ENCODE measurements at regions of chr7 and their contacts with region 1.

Region 1: DNA sequence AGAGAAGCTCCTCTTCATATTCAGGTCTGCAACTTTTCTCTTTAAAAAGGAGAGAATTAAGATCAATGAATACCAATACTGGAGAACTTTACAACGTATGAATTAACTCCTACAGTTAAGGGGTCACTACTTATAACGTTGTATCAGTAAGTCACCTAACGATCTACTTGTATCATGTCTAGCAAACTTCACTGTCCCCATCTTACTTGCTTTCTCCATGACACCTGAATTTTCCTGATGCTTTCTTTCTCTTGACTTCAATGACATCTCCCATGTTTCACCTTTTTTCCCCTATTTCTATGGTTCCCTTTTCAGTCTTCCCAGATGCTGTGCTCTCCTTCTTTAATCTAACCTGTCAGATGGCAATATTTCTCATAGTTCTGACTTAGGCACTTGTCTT is 19.6 kb downstream of the NAMPT start:
- DNase-seq: no peak
- H3K4me3 Mint-ChIP-seq: no peak overlapping the region
- H3K27ac Mint-ChIP-seq: peak overlapping the region; percentile 1
- H3K4me1 Mint-ChIP-seq: peaks cover 27% of the 10 kb centered on the region
- H3K27me3 Mint-ChIP-seq: no peaks in the 10 kb centered on the region

Region 2: GRCh38 chr7:106239404-106239803 is 25.7 kb before region 1 on chr7:
- intact Hi-C with region 1: no loop called
- DNase-seq: no peak
- H3K4me3 Mint-ChIP-seq: no peak overlapping the region
- H3K27ac Mint-ChIP-seq: no peak overlapping the region
- H3K4me1 Mint-ChIP-seq: no peaks in the 10 kb centered on the region
- H3K27me3 Mint-ChIP-seq: no peaks in the 10 kb centered on the region

Region 3: GRCh38 chr7:106279425-106280197 is 14.5 kb after region 1 on chr7:
- intact Hi-C with region 1: loop called (anchors 2 kb)
- DNase-seq: no peak
- H3K4me3 Mint-ChIP-seq: peak overlapping the region; percentile 100
- H3K27ac Mint-ChIP-seq: peak overlapping the region; percentile 93
- H3K4me1 Mint-ChIP-seq: peaks cover 69% of the 10 kb centered on the region
- H3K27me3 Mint-ChIP-seq: peaks cover under 1% of the 10 kb centered on the region

Region 4: GRCh38 chr7:106294337-106294736 is 29.2 kb after region 1 on chr7:
- intact Hi-C with region 1: no loop called
- DNase-seq: no peak
- H3K4me3 Mint-ChIP-seq: no peak overlapping the region
- H3K27ac Mint-ChIP-seq: no peak overlapping the region
- H3K4me1 Mint-ChIP-seq: no peaks in the 10 kb centered on the region
- H3K27me3 Mint-ChIP-seq: peaks cover 3% of the 10 kb centered on the region

Region 5: GRCh38 chr7:106329971-106330733 is 65.0 kb after region 1 on chr7:
- intact Hi-C with region 1: no loop called
- DNase-seq: no peak
- H3K4me3 Mint-ChIP-seq: peak overlapping the region; percentile 29
- H3K27ac Mint-ChIP-seq: peak overlapping the region; percentile 14
- H3K4me1 Mint-ChIP-seq: peaks cover 19% of the 10 kb centered on the region
- H3K27me3 Mint-ChIP-seq: peaks cover 2% of the 10 kb centered on the region